ENCODE measurements at regions of chr2 and their contacts with region 1.

Region 1: GRCh38 chr2:100269889-100270288 is 52.4 kb downstream of the LONRF2 start:
- DNase-seq: no peak
- ATAC-seq: no peak
- H3K4me3 ChIP-seq: no peak overlapping the region
- H3K27ac ChIP-seq: no peak overlapping the region
- H3K4me1 ChIP-seq: no peaks in the 10 kb centered on the region
- H3K27me3 ChIP-seq: no peaks in the 10 kb centered on the region
- CTCF ChIP-seq: no peak

Region 2: GRCh38 chr2:99670768-99671734 is 598.8 kb before region 1 on chr2:
- intact Hi-C with region 1: no loop called
- DNase-seq: peak in 2 of 4 donors; percentile 44 to 69
- ATAC-seq: peak; percentile 78
- H3K4me3 ChIP-seq: no peak overlapping the region
- H3K27ac ChIP-seq: no peak overlapping the region
- H3K4me1 ChIP-seq: peaks cover 0 to 14% of the 10 kb centered on the region in 2 donors
- H3K27me3 ChIP-seq: no peaks in the 10 kb centered on the region
- CTCF ChIP-seq: no peak

Region 3: GRCh38 chr2:100174026-100174431 is 95.9 kb before region 1 on chr2:
- intact Hi-C with region 1: no loop called
- DNase-seq: no peak
- ATAC-seq: peak; percentile 31
- H3K4me3 ChIP-seq: no peak overlapping the region
- H3K27ac ChIP-seq: no peak overlapping the region
- H3K4me1 ChIP-seq: no peaks in the 10 kb centered on the region
- H3K27me3 ChIP-seq: no peaks in the 10 kb centered on the region
- CTCF ChIP-seq: no peak

Region 4: GRCh38 chr2:100208141-100208770 is 61.6 kb before region 1 on chr2:
- intact Hi-C with region 1: no loop called
- DNase-seq: no peak
- ATAC-seq: no peak
- H3K4me3 ChIP-seq: no peak overlapping the region
- H3K27ac ChIP-seq: no peak overlapping the region
- H3K4me1 ChIP-seq: peaks cover 0 to 9% of the 10 kb centered on the region in 2 donors
- H3K27me3 ChIP-seq: no peaks in the 10 kb centered on the region
- CTCF ChIP-seq: no peak

Region 5: GRCh38 chr2:100381240-100381639 is 111.4 kb after region 1 on chr2:
- intact Hi-C with region 1: loop called in 1 of 2 experiments (anchors 5 kb)
- DNase-seq: peak in 3 of 4 donors; percentile 37 to 76 (median 75)
- ATAC-seq: peak; percentile 91
- H3K4me3 ChIP-seq: no peak overlapping the region
- H3K27ac ChIP-seq: no peak overlapping the region
- H3K4me1 ChIP-seq: no peaks in the 10 kb centered on the region
- H3K27me3 ChIP-seq: no peaks in the 10 kb centered on the region
- CTCF ChIP-seq: peak; percentile 82 to 84

Measured in left lung (tissue), 14 donors.